WTC11 (cell line): ENCODE measurements at regions of chr4 and their contacts with region 1.

Region 1: GRCh38 chr4:25312496-25313200 is at the start of gene ZCCHC4:
- DNase-seq: peak; percentile 81
- ATAC-seq: peak; percentile 97
- H3K4me3 Mint-ChIP-seq: peak within 1 kb of the TSS; percentile 99
- H3K27ac Mint-ChIP-seq: peak within 1 kb of the TSS; percentile 99
- H3K4me1 Mint-ChIP-seq: peaks cover 11% of the 10 kb centered on the region; the same call in 1 of the 2 replicates
- H3K27me3 Mint-ChIP-seq: no peaks in the 10 kb centered on the region
- CTCF ChIP-seq: peak; percentile 85
- total RNA-seq, gene ZCCHC4: 12.4 to 13.6 TPM (median 13.3 TPM) in 3 replicates

Region 2: DNA sequence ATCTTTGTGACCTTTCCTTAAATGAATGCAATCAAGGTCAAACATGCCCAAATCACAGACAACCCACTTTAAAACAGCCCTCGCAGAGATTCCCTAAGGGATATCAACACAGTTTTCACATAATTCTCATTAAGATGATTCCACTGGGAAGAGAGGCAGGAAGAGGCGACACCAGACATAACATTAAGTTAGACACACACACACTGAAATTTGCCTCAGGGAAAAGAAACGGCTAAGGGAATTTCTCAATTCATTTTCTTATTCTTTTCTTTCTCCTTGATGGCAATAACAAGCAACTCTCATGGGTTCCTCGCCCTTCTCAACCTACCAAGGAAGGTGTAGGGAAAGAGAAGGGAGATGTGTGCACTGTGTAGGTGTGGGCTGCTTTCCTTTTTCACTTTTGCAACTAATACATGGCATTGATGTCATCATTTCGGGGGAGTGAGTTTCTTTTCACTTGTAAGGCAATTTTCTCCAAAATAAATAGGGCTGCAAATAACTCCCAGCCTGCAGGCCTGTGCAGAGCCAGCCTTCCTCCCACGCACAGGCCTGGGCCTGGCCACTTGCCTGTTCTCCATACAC is 475.9 kb before region 1 on chr4:
- CTCF ChIA-PET with region 1: no interaction called
- POLR2A ChIA-PET with region 1: no interaction called
- DNase-seq: no peak
- ATAC-seq: no peak
- H3K4me3 Mint-ChIP-seq: no peak overlapping the region
- H3K27ac Mint-ChIP-seq: no peak overlapping the region
- H3K4me1 Mint-ChIP-seq: no peaks in the 10 kb centered on the region
- H3K27me3 Mint-ChIP-seq: no peaks in the 10 kb centered on the region
- CTCF ChIP-seq: no peak

Region 3: DNA sequence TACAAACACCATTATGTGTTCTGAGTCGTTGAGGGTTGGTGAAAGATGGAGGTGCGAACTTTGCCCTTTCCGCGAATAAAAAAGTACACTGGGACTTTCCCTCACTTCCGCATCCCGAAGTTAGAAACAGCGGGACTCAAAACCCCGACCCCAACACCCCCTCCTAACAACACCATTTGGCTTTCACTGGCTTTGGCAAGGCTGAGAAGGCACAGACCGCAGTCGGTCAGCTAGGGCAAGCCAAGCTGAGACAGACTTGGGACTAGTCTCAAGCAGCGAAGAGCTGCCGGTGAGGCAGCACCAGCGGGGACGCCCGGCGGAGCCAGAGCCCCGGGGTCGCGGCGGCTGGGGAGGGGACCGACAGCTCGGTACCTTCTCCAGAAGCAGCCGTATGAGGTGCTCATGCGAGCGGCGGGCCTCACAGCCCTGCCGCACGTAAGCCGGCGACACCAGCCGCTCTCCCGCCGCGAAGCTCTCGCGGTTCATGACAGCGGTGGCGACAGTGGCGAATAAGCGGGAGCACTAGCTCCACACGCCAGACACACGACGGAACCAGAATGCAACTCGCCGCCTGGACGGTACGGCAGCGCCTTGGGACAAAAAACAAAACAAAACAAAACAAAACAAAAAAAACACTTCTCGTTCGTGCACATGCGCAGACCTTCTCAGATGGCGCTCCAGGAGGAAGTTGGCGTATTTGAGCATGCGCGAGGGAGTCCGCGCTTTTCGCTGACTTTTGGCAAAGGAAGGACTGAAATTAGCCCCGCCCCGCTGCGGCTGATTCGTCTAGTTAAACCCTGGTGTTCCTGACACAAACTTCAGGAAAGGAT is 152.5 kb before region 1 on chr4 and contains the start of gene SEPSECS:
- CTCF ChIA-PET with region 1: interaction called, 22 read pairs
- POLR2A ChIA-PET with region 1: interaction called, 4 read pairs
- DNase-seq: peak; percentile 87
- ATAC-seq: peak; percentile 81
- H3K4me3 Mint-ChIP-seq: peak within 1 kb of the TSS; percentile 88
- H3K27ac Mint-ChIP-seq: peak within 1 kb of the TSS; percentile 87
- H3K4me1 Mint-ChIP-seq: peaks cover 25% of the 10 kb centered on the region
- H3K27me3 Mint-ChIP-seq: no peaks in the 10 kb centered on the region
- CTCF ChIP-seq: no peak
- total RNA-seq, gene SEPSECS: 4.6 to 7.0 TPM (median 6.2 TPM) in 3 replicates

Region 4: GRCh38 chr4:25290490-25291067 is 22.1 kb before region 1 on chr4:
- CTCF ChIA-PET with region 1: interaction called, 20 read pairs
- POLR2A ChIA-PET with region 1: no interaction called
- DNase-seq: no peak
- ATAC-seq: peak; percentile 41
- H3K4me3 Mint-ChIP-seq: no peak overlapping the region
- H3K27ac Mint-ChIP-seq: no peak overlapping the region
- H3K4me1 Mint-ChIP-seq: peaks cover 4% of the 10 kb centered on the region
- H3K27me3 Mint-ChIP-seq: peaks cover 7% of the 10 kb centered on the region
- CTCF ChIP-seq: no peak

Region 5: GRCh38 chr4:25330905-25331808 is 18.5 kb after region 1 on chr4:
- CTCF ChIA-PET with region 1: interaction called, 13 read pairs
- POLR2A ChIA-PET with region 1: no interaction called
- DNase-seq: no peak
- ATAC-seq: no peak
- H3K4me3 Mint-ChIP-seq: no peak overlapping the region
- H3K27ac Mint-ChIP-seq: no peak overlapping the region
- H3K4me1 Mint-ChIP-seq: no peaks in the 10 kb centered on the region
- H3K27me3 Mint-ChIP-seq: no peaks in the 10 kb centered on the region
- CTCF ChIP-seq: no peak

Region 6: GRCh38 chr4:25376754-25377571 is 64.3 kb after region 1 on chr4 and contains the start of gene ANAPC4:
- CTCF ChIA-PET with region 1: interaction called, 16 read pairs
- POLR2A ChIA-PET with region 1: no interaction called
- DNase-seq: peak; percentile 99
- ATAC-seq: peak; percentile 91
- H3K4me3 Mint-ChIP-seq: peak within 1 kb of the TSS; percentile 79
- H3K27ac Mint-ChIP-seq: peak within 1 kb of the TSS; percentile 90
- H3K4me1 Mint-ChIP-seq: peaks cover 16% of the 10 kb centered on the region
- H3K27me3 Mint-ChIP-seq: no peaks in the 10 kb centered on the region
- CTCF ChIP-seq: no peak
- total RNA-seq, gene ANAPC4: 33.4 to 40.5 TPM (median 35.6 TPM) in 3 replicates

Region 7: DNA sequence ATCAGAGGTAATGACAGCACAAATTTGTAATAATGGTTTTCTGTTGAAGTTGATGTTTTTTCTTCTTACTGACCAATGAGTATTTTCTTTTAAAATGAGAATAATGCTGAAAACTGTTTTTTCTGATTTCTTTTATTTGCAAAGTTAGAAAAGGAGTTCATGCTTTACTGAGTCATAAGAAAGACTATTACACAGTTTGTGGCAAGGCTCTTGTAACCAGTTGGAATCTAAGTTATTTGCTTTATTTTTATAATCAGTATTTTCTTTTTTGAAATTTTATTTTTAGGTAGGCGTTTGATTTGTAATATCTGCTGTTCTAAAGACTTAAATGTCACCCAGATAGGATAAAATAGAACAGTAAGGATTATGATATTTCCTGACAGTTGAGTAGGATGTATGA is 89.9 kb after region 1 on chr4:
- CTCF ChIA-PET with region 1: no interaction called
- POLR2A ChIA-PET with region 1: no interaction called
- DNase-seq: no peak
- ATAC-seq: no peak
- H3K4me3 Mint-ChIP-seq: no peak overlapping the region
- H3K27ac Mint-ChIP-seq: no peak overlapping the region
- H3K4me1 Mint-ChIP-seq: no peaks in the 10 kb centered on the region
- H3K27me3 Mint-ChIP-seq: no peaks in the 10 kb centered on the region
- CTCF ChIP-seq: no peak